OCI-LY7 (cell line): ENCODE measurements at regions of chr12 and their contacts with region 1.

Region 1: DNA sequence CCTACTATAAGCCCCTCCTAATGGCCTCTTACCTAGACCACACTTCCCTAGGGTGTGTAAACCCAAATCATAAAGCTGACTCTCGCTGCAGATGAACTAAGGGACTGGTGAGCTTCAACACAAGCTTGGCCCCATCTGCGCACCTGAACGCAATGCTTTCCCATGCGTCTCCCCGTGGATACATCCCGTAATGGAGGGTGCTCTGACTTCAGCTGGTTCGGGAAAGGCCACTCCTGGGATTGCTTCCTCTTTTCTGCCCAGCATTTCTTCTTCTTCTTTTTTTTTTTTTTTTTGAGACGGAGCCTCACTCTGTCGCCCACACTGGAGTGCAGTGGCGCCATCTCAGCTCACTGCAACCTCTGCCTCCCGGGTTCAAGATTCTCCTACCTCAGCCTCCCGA is 27.7 kb upstream of the ETFBKMT start:
- DNase-seq: no peak
- H3K4me3 ChIP-seq: no peak overlapping the region
- H3K27ac ChIP-seq: no peak overlapping the region
- H3K4me1 ChIP-seq: peaks cover 45% of the 10 kb centered on the region
- CTCF ChIP-seq: no peak

Region 2: DNA sequence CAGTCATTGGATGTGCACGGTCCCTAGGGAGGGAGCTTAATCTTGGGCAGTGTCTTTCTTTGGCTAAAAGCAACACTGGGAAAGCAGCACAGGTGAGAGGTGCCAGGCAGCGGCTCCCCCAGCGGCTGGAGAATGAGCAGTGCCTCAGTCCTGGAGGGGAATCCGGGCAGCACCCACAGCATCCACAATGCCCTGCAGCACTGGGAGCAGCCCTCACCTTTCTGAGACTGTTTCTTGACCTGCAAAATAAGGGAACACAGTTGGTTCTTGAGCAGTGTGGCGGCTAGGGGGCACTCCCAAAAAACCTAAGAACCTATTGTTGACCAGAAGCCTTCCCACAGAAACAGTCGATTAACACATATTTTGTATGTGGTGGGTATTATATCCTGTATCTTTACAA is 381.6 kb before region 1 on chr12:
- CTCF ChIA-PET with region 1: no interaction called
- POLR2A ChIA-PET with region 1: no interaction called
- intact Hi-C with region 1: loop called (anchors 5 kb)
- DNase-seq: peak; percentile 12
- H3K4me3 ChIP-seq: no peak overlapping the region
- H3K27ac ChIP-seq: no peak overlapping the region
- H3K4me1 ChIP-seq: peaks cover 9% of the 10 kb centered on the region
- CTCF ChIP-seq: peak; percentile 49

Region 3: GRCh38 chr12:31274520-31275300 is 357.1 kb before region 1 on chr12:
- CTCF ChIA-PET with region 1: no interaction called
- POLR2A ChIA-PET with region 1: no interaction called
- intact Hi-C with region 1: loop called (anchors 5 kb)
- DNase-seq: no peak
- H3K4me3 ChIP-seq: no peak overlapping the region
- H3K27ac ChIP-seq: no peak overlapping the region
- H3K4me1 ChIP-seq: no peaks in the 10 kb centered on the region
- CTCF ChIP-seq: no peak

Region 4: DNA sequence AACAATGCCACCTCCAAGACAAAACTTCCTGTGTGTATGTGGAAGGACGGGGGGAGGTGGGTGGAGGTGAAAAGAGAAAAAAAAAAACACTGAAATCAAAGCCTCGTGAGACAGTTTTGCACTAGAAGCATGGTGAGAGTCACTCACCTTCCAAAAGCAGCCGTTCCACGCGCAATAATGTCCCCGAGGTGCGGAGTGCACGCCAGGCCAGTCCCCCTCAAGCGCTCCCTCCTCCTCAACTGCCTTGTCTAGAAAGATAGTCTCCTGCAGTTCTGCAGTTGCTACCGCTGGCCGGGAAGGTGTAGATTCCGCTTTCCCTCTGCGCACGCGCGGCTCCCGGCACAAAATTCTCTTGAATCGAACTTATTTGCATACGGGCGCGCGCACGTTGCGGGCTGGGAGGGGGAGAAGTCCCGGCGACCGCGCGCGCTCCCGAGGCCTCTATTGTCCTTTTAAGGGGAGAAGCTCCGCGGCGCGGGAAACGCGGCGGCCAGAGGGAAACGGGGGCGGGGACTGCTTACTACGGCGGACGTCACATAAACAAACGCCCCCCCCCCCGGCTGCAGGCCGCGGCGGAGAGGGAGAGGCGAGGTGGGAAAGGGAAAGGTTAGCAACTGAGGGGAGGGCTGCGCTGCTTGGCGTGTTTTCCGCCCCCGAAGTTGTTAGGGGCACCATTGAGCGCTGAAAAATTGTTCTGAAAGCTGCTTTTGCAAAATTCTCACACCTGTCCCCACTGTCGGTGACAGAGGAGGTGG is 305.7 kb before region 1 on chr12 and contains the start of gene SINHCAF:
- CTCF ChIA-PET with region 1: no interaction called
- POLR2A ChIA-PET with region 1: no interaction called
- intact Hi-C with region 1: loop called (anchors 5 kb)
- DNase-seq: peak; percentile 99
- H3K4me3 ChIP-seq: peak within 1 kb of the TSS; percentile 86
- H3K27ac ChIP-seq: peak within 1 kb of the TSS; percentile 69
- H3K4me1 ChIP-seq: peaks cover 26% of the 10 kb centered on the region
- CTCF ChIP-seq: no peak
- total RNA-seq, gene SINHCAF: 51.0 and 54.0 TPM in 2 replicates

Region 5: GRCh38 chr12:31518680-31519227 is 113.0 kb before region 1 on chr12:
- CTCF ChIA-PET with region 1: no interaction called
- POLR2A ChIA-PET with region 1: no interaction called
- intact Hi-C with region 1: loop called (anchors 5 kb)
- DNase-seq: peak; percentile 33
- H3K4me3 ChIP-seq: no peak overlapping the region
- H3K27ac ChIP-seq: peak overlapping the region; percentile 15
- H3K4me1 ChIP-seq: peaks cover 32% of the 10 kb centered on the region
- CTCF ChIP-seq: no peak

Region 6: DNA sequence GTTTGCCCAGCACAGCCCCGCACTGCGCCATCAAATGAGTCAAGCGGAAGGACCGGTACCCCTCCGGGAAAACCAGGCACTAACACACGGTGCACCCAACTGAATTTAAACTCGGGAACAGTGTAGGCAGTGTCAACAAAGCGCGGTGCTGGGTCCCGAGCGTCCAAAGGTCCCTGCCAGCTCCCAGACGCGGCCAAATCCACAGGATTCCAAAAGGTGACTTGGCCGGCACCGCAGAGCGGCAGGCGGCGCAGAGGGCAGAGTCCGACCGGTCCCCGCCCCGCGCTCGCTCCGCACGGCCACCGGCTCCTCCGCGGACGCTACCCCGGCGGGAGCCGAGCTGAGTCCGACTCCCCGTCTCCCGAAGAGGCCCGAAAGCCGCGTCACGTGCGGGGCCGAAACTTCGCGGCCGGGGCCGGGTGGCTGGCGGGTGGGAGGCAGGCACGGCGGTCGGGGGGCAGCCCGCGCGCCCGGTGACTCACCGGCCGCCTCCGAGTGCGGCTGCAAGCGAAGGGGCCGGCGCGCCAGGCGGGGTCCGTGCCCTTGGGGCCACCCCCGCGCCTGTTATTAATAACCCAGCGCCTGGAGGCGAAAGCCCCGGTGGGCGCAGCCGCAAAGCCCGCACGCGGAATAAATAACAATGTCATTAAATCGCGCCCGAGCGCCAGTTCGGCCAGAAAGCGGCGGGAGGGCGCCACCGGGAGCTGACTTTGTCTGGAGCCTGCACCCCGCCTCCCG is 41.7 kb before region 1 on chr12:
- CTCF ChIA-PET with region 1: no interaction called
- POLR2A ChIA-PET with region 1: interaction called, 6 read pairs
- intact Hi-C with region 1: loop called (anchors 1 kb)
- DNase-seq: peak; percentile 81
- H3K4me3 ChIP-seq: peak overlapping the region; percentile 89
- H3K27ac ChIP-seq: peak overlapping the region; percentile 72
- H3K4me1 ChIP-seq: peaks cover 55% of the 10 kb centered on the region
- CTCF ChIP-seq: peak; percentile 54

Region 7: DNA sequence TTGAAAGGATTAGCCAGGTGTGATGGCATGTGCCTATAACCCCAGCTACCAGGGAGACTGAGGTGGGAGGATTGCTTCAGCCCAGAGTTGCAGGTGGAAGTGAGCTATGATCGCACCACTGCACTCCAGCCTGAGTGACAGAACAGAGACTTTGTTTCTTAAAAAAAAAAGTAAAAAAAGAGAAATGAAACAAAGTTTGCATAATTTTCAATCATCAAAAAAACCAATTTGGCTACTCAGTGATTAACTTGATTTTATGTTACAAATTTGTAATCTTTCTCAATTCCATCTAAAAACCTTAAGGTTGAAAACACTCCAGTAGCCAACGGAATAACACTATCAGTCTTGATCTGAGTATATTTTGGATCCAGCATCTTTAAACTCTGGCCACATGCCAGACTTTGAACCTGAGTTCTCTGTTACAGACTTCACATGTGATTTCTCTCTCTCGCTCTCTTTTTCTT is 28.2 kb before region 1 on chr12:
- CTCF ChIA-PET with region 1: no interaction called
- POLR2A ChIA-PET with region 1: interaction called, 13 read pairs
- intact Hi-C with region 1: loop called (anchors 1 kb)
- DNase-seq: peak; percentile 92
- H3K4me3 ChIP-seq: peak overlapping the region; percentile 42
- H3K27ac ChIP-seq: peak overlapping the region; percentile 96
- H3K4me1 ChIP-seq: peaks cover 69% of the 10 kb centered on the region
- CTCF ChIP-seq: no peak